ENCODE measurements at regions of chr22 and their contacts with region 1.

Region 1: DNA sequence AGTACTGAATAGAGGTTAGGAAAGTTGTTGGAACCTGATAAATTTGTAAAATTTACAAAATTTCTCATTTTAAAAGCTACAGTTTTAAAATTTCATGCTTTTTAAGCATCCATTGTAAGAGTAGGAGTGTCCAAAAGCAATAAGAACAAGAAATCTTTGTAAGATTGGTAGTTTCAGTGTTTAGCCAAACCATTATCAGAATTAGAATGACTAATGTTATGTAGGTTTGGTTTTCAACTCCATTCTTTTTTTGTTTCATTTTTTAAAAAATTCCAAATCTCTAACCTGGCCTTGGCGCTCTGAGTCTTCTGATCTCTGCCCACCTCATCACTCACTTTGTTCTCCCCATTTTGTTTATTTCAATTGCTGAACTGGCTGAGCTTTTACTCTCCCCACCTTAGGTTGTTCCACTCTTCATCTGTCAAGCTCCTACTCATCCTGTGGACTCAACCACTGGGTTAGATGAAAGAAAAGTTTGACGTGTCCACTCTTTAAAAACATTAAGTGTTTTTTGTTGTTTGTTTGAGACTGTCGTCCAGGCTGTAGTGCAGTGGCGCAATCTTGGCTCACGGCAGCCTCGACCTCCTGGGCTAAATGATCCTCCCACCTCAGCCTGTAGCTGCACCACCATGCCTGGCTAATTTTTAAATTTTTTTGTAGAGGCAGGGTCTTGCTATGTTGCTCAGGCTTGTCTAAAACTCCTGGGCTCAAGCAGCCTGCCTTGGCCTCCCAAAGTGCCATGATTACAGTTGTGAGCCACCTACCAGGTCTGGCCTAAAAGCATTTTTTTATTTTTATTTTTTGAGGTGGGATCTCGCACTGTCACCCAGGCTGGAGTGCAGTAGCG is 14.0 kb downstream of the EP300 start:
- DNase-seq: no peak
- ATAC-seq: no peak
- H3K4me3 Mint-ChIP-seq: no peak overlapping the region
- H3K27ac Mint-ChIP-seq: peak overlapping the region; percentile 8
- H3K4me1 Mint-ChIP-seq: peaks cover 51% of the 10 kb centered on the region
- H3K27me3 Mint-ChIP-seq: no peaks in the 10 kb centered on the region
- CTCF ChIP-seq: no peak

Region 2: GRCh38 chr22:41197038-41197972 is 91.0 kb after region 1 on chr22:
- CTCF ChIA-PET with region 1: no interaction called
- POLR2A ChIA-PET with region 1: interaction called, 13 read pairs
- intact Hi-C with region 1: no loop called
- DNase-seq: peak; percentile 89
- ATAC-seq: peak; percentile 92
- H3K4me3 Mint-ChIP-seq: peak overlapping the region; percentile 89
- H3K27ac Mint-ChIP-seq: no peak overlapping the region
- H3K4me1 Mint-ChIP-seq: peaks cover 8% of the 10 kb centered on the region
- H3K27me3 Mint-ChIP-seq: peaks cover 4% of the 10 kb centered on the region
- CTCF ChIP-seq: no peak

Region 3: DNA sequence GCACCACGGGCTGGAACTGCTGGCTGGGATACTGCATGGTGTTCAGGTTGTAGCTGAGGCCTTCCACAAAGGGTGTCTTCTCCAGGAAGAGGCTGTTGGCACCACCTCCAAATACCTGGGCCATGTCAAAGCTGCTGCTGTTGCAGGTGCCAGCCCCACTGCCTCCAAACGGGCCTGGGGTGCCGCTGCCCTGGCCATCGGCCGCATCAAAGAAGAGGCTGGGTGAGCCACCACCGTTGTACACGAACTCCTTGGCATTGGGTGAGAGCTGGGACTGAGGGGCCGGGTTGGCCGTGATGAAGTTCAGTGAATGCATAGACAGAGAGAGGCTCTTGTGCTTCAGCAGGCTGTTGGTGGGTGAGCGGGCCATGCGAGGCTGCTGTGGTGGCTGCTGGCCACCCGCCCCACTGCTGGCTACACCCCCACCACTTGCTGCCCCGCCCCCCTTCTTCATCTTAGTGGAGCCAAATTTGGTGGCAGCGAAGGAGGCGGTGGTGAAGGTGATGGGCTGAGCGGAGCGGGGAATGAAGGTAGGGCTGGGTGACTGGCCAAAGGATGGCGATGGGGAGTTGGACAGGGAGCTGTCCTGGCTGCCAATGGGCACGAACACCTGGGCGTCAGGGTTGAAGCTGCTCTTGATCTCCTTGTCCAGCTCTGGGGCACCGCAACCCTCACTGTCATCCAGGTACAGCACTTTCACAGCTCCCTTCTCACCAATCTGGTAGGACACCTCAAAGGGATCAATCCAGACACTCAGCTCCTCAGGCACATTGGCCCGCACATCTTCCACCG is 330.2 kb after region 1 on chr22:
- CTCF ChIA-PET with region 1: no interaction called
- POLR2A ChIA-PET with region 1: no interaction called
- intact Hi-C with region 1: no loop called
- DNase-seq: no peak
- ATAC-seq: peak; percentile 7
- H3K4me3 Mint-ChIP-seq: no peak overlapping the region
- H3K27ac Mint-ChIP-seq: no peak overlapping the region
- H3K4me1 Mint-ChIP-seq: peaks cover 16% of the 10 kb centered on the region
- H3K27me3 Mint-ChIP-seq: no peaks in the 10 kb centered on the region
- CTCF ChIP-seq: no peak